Head of caudate nucleus (tissue), 42 donors: ENCODE measurements at regions of chr1 and their contacts with region 1.

Region 1: GRCh38 chr1:182391362-182392044 is at the start of gene GLUL:
- DNase-seq: peak; percentile 87 to 98 (median 96)

Region 2: GRCh38 chr1:182143154-182143657 is 248.3 kb before region 1 on chr1:
- intact Hi-C with region 1: loop called (anchors 2 kb)
- DNase-seq: peak; percentile 87 to 99 (median 96)

Region 3: GRCh38 chr1:182279724-182280503 is 111.6 kb before region 1 on chr1:
- intact Hi-C with region 1: loop called (anchors 2 kb)
- DNase-seq: peak; percentile 75 to 97 (median 90)

Region 4: DNA sequence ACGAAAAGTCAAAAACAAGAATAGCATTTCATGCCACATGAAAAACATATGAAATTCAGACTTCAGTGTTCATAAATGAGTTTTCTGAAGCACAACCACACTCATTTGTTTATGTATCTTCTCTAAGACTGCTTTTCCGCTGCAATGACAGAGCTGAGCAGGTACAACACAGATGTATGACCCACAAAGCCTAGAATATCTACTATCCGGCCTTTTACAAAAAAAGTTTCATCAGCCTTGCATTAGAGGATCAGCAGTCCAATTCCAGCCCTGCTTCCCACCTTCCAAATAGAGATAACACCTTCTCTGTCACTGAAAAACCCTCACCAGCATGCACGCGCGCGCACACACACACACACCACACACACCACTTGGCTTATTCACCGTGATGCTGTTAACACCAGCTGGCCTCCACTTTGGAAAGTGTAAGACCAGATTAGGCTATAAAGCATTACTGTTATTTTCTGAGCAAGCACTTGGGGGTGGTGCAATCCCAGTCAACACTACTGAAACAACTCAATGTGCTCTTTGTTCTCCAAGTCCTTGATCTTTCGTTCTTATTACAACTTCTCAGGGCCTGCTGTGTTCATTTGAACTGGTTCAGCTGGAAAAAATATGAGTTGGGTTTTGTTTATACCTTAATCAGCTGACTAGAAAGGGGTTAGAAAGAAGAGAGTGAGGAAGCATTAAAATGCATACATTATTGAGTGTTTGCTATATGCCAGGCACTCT is 89.9 kb before region 1 on chr1:
- intact Hi-C with region 1: loop called (anchors 5 kb)
- DNase-seq: peak in 37 of 42 donors; percentile 13 to 86 (median 63)

Region 5: DNA sequence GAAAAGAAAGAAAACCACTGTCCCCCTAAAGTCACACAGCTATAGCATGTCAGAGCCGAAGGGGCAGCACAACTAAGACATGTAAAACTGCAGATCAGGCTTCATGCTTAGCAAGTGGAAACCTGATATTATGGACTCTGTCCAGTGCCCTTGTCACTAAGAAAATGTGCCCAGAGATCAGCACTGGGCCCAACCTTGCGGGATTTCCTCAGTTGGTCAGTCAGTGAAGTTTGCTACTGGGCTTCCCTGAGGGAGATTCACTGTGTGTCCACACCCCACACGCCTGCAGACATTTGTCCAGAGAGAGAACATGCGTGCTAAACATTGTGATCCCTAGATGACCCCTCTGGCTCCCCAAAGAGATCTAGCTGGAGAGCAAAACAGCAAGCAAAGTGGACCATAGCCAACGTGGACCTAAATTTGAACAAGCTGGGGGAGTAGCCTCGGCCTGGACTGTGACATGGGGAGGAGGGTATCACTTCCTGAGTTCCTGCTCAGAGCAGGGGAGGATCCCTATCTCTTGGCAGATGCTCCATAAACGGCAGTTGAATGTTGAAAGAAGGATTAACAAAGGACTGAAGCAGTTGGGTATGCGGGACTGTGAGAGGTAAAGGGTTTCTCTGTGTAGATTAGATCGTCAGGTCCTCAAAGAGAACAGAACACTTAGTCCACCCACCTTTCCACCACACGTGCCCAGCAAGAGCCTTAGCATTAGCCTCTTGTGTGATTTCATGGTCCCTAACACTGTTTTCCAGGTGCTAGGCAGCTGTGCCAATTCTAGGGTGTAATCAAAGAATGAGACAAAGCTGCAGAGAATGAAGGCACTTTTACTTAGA is 53.5 kb before region 1 on chr1:
- intact Hi-C with region 1: no loop called
- DNase-seq: no peak